Aorta (tissue), 5 donors: ENCODE measurements at regions of chr3 and their contacts with region 1.

Region 1: DNA sequence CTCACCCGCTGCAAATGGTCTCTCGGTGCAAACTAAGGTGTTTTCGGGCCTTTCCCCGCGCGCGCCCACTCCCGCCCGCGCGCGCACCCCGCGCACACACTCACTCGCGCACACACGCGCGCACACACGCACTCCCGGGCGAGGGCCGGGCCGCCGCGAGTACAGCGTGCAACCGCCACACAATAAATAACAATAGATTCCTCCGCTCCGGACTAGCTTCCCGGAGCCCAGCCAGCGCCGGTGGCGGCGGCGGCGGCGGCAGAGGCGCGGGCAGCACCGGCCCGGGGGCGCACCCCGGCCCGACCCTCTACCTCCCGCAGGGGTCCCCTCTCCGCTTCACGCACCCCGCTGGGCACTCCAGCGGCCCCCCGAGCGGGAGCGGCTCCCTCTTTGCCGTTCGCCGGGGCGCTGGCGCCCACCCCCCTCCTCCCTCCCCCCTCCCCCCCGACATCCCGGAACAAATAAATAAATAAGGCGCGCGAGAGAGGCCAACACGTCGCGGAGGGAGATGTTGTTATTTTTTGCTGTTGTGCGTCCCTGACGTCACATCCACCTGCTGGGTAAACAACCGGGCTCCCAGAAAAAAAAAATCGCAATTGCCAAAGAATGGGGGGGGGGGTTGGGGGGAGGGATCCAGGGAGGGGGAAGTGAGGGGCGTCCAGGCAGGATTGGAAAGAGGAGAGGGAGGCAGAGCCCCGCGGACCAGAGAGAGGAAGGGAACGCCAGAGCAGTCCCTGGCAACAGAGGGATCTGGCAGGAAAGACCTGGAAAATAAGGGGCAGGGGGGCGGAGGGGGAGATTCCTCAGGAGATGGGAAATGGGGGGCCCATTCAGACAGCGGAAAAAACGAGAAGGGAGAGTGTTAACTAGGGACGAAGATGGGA is at the start of gene FOXP1:
- DNase-seq: peak; percentile 85 to 90
- ATAC-seq: peak; percentile 73
- H3K4me3 ChIP-seq: peak within 1 kb of the TSS; percentile 67 to 82
- H3K27ac ChIP-seq: peak within 1 kb of the TSS; percentile 97 to 99
- H3K4me1 ChIP-seq: no peaks in the 10 kb centered on the region
- H3K27me3 ChIP-seq: no peaks in the 10 kb centered on the region
- total RNA-seq, gene FOXP1: 187 to 263 TPM

Region 2: GRCh38 chr3:70716832-70717231 is 867.0 kb before region 1 on chr3:
- intact Hi-C with region 1: loop called in 1 of 2 experiments (anchors 10 kb)
- DNase-seq: peak in 1 of 2 donors; percentile 45
- ATAC-seq: no peak
- H3K4me3 ChIP-seq: no peak overlapping the region
- H3K27ac ChIP-seq: no peak overlapping the region
- H3K4me1 ChIP-seq: no peaks in the 10 kb centered on the region
- H3K27me3 ChIP-seq: no peaks in the 10 kb centered on the region

Region 3: DNA sequence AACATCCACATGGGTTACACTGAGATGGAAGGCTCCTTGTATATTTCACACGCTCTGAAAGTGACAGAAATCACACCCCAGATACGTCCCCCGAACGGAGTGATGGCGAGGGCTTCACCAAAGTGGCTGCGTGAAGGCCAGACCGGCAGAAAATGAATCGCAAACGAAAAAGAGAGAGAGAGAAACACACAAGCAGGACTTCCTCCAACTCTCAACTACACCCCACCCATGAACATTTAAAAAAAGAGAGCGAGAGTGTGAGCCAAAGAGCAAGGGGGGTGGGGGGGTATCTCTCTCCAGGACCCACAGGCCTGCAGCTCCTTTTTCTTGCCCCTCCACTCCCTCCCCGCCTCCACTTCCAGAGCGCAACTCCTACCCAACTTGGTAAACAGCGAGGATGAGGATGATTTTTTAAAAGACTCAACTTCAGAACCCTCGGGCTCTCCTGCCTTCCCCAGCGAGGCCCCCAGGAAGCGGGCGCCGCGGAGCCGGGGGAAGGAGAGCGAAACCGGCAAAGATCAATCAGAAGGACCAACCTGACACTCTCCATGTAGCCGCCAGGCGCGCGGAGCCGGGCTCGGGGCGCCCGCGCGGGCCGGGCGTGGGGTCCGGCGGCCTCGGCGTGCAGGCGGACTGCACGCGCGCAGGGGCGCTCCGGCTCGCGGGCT is 519.4 kb before region 1 on chr3:
- intact Hi-C with region 1: loop called in 1 of 2 experiments (anchors 5 kb)
- DNase-seq: peak; percentile 71 to 78
- ATAC-seq: peak; percentile 68
- H3K4me3 ChIP-seq: peak overlapping the region; percentile 76 to 88
- H3K27ac ChIP-seq: peak overlapping the region; percentile 62 to 99
- H3K4me1 ChIP-seq: peaks cover 3 to 5% of the 10 kb centered on the region in 2 donors
- H3K27me3 ChIP-seq: no peaks in the 10 kb centered on the region

Region 4: GRCh38 chr3:71160800-71161546 is 422.8 kb before region 1 on chr3:
- intact Hi-C with region 1: loop called in 1 of 2 experiments (anchors 5 kb)
- DNase-seq: no peak
- ATAC-seq: no peak
- H3K4me3 ChIP-seq: no peak overlapping the region
- H3K27ac ChIP-seq: peak overlapping the region in 1 of 2 donors; percentile 43
- H3K4me1 ChIP-seq: peaks cover 5 to 8% of the 10 kb centered on the region in 2 donors
- H3K27me3 ChIP-seq: no peaks in the 10 kb centered on the region

Region 5: DNA sequence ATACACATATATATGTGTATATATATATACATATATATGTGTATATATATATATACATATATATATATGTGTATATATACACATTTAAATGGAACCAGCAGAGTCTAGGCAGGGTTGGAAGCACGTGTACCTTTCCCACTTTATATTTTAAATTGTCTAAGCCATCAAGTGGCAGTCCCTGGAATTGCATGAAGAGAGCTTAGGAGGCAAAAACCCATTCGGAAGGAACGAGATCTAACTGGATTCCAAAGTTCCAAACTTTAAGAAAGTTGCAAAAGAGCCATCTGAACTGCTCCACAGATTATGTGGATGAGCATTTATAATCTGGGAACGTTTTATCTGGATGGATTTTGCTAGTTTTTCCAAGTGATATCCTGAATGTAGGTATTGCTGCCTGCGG is 186.8 kb before region 1 on chr3:
- intact Hi-C with region 1: loop called (anchors 5 to 10 kb)
- DNase-seq: no peak
- ATAC-seq: peak; percentile 75
- H3K4me3 ChIP-seq: no peak overlapping the region
- H3K27ac ChIP-seq: no peak overlapping the region
- H3K4me1 ChIP-seq: peaks cover 0 to 3% of the 10 kb centered on the region in 2 donors
- H3K27me3 ChIP-seq: no peaks in the 10 kb centered on the region

Region 6: GRCh38 chr3:71512000-71512399 is 71.8 kb before region 1 on chr3:
- intact Hi-C with region 1: loop called (anchors 1 to 5 kb)
- DNase-seq: no peak
- ATAC-seq: no peak
- H3K4me3 ChIP-seq: no peak overlapping the region
- H3K27ac ChIP-seq: peak overlapping the region in 1 of 2 donors; percentile 76
- H3K4me1 ChIP-seq: peaks cover 4 to 5% of the 10 kb centered on the region in 2 donors
- H3K27me3 ChIP-seq: no peaks in the 10 kb centered on the region

Region 7: GRCh38 chr3:71652781-71653413 is 69.1 kb after region 1 on chr3:
- intact Hi-C with region 1: loop called in 1 of 2 experiments (anchors 5 kb)
- DNase-seq: peak in 1 of 2 donors; percentile 70
- ATAC-seq: peak; percentile 66
- H3K4me3 ChIP-seq: peak overlapping the region in 1 of 2 donors; percentile 63
- H3K27ac ChIP-seq: no peak overlapping the region
- H3K4me1 ChIP-seq: no peaks in the 10 kb centered on the region
- H3K27me3 ChIP-seq: no peaks in the 10 kb centered on the region

Region 8: GRCh38 chr3:71903112-71903495 is 319.3 kb after region 1 on chr3:
- intact Hi-C with region 1: no loop called
- DNase-seq: peak in 1 of 2 donors; percentile 69
- ATAC-seq: no peak
- H3K4me3 ChIP-seq: no peak overlapping the region
- H3K27ac ChIP-seq: no peak overlapping the region
- H3K4me1 ChIP-seq: no peaks in the 10 kb centered on the region
- H3K27me3 ChIP-seq: no peaks in the 10 kb centered on the region